ENCODE measurements at regions of chr1 and their contacts with region 1.

Region 1: DNA sequence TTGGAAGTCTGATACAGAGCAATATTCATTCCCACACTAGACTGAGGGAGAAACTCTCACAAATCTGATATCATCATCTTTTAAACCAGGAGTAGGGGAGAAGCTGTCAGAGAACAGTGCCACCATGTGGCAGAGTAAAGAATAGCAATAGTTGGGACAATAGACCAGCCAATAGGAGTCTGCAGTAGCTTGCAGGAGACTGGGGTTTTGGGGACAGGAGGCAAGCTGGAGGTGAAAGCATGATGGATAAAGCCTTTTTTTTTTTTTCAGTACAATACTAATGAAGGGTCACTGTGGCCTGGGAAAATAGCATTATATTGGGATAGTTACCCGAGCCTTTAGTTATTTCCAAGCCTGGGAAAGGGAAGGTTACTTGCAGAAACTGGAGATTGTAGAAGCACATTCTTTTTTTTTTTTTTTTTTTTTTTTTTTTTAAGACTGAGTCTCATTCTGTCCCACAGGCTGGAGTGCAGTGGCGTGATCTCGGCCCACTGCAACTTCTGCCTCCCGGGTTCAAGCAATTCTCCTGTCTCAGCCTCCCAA is 120.7 kb downstream of the S1PR1 start:
- DNase-seq: peak; percentile 69
- H3K4me3 Mint-ChIP-seq: no peak overlapping the region
- H3K27ac Mint-ChIP-seq: no peak overlapping the region
- H3K4me1 Mint-ChIP-seq: peaks cover 9% of the 10 kb centered on the region
- H3K27me3 Mint-ChIP-seq: peaks cover 23% of the 10 kb centered on the region

Region 2: DNA sequence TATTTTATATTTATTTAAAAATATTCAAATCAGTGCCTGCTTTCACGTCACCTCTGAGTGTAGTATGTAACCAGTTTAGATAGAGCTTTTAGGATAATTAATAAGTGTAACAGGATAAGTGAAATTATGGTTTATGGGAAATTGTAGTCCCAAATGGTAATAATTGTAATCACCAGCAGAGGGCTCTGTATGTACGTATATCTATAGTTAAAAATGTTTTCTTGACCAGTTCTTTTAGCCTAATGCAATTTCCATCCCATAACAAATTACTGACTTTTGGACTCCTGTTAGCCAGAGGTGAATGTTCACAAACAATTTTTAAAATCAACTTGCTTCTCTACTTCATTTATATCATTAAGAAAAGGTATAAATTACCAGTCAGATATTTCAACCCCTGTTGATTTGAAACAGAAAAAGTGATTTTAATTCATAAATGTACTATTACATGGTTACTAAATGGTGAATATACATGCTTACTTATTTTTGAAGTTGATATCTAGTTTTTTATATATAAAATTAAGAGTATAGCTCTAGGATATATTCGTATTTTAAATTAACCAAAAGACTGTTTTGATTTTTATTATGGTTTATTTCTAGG is 436.3 kb before region 1 on chr1:
- intact Hi-C with region 1: loop called (anchors 1 kb)
- DNase-seq: no peak
- H3K4me3 Mint-ChIP-seq: no peak overlapping the region
- H3K27ac Mint-ChIP-seq: no peak overlapping the region
- H3K4me1 Mint-ChIP-seq: peaks cover 29% of the 10 kb centered on the region
- H3K27me3 Mint-ChIP-seq: no peaks in the 10 kb centered on the region

Region 3: GRCh38 chr1:101025657-101026504 is 331.6 kb before region 1 on chr1 and contains the start of gene DPH5:
- intact Hi-C with region 1: loop called (anchors 2 kb)
- DNase-seq: peak; percentile 84
- H3K4me3 Mint-ChIP-seq: peak within 1 kb of the TSS; percentile 93
- H3K27ac Mint-ChIP-seq: peak within 1 kb of the TSS; percentile 87
- H3K4me1 Mint-ChIP-seq: peaks cover 58% of the 10 kb centered on the region
- H3K27me3 Mint-ChIP-seq: no peaks in the 10 kb centered on the region
- total RNA-seq, gene DPH5: 31.7 and 32.2 TPM in 2 replicates

Region 4: DNA sequence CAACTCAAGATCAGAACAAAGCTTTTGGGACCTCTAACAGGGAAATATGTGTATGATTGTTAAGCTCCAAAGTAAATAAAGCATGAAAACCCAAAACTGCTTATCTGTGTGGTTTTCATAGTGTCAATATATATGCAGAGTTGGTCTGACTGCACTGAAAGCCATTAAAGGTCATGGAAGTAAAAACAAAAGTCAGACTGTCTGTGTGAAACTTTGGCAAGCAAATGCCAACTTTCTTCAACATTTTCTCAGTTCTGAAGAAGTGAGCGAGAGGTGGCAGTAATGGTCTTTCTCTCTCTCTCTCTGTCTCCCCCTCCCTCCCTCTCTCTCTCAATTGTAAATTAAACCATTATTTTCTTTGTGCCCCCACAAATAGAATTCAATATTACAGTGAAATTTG is 220.8 kb before region 1 on chr1:
- intact Hi-C with region 1: loop called (anchors 1 kb)
- DNase-seq: peak; percentile 26
- H3K4me3 Mint-ChIP-seq: peak overlapping the region; percentile 30
- H3K27ac Mint-ChIP-seq: peak overlapping the region; percentile 38
- H3K4me1 Mint-ChIP-seq: peaks cover 63% of the 10 kb centered on the region
- H3K27me3 Mint-ChIP-seq: no peaks in the 10 kb centered on the region

Region 5: GRCh38 chr1:101293461-101294051 is 64.0 kb before region 1 on chr1:
- intact Hi-C with region 1: loop called (anchors 1 kb)
- DNase-seq: peak; percentile 37
- H3K4me3 Mint-ChIP-seq: peak overlapping the region; percentile 34
- H3K27ac Mint-ChIP-seq: peak overlapping the region; percentile 90
- H3K4me1 Mint-ChIP-seq: peaks cover 71% of the 10 kb centered on the region
- H3K27me3 Mint-ChIP-seq: peaks cover 13% of the 10 kb centered on the region

Region 6: DNA sequence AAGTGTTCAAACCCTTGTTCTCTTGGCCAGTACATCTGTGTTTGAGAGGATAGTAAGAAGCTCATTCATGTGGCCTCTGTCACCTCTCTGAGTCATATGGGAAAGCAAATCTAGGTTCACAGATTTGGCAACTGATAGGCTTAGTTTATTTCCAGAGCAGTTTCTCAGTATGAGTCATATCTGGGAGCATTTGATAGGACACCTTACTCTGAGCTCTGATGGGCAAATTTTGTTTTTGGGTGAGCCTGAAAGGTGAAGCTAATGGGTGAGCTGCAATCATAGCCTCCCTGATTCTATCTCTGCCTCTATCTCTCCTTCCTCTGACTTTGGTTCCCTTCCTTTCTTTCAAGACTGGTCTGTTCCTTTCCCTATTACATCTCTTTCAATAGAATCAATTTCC is 13.7 kb after region 1 on chr1:
- intact Hi-C with region 1: loop called (anchors 2 kb)
- DNase-seq: peak; percentile 33
- H3K4me3 Mint-ChIP-seq: peak overlapping the region; percentile 40
- H3K27ac Mint-ChIP-seq: no peak overlapping the region
- H3K4me1 Mint-ChIP-seq: peaks cover 12% of the 10 kb centered on the region
- H3K27me3 Mint-ChIP-seq: peaks cover 14% of the 10 kb centered on the region

Region 7: GRCh38 chr1:101382135-101382534 is 24.6 kb after region 1 on chr1:
- intact Hi-C with region 1: no loop called
- DNase-seq: no peak
- H3K4me3 Mint-ChIP-seq: no peak overlapping the region
- H3K27ac Mint-ChIP-seq: no peak overlapping the region
- H3K4me1 Mint-ChIP-seq: peaks cover 27% of the 10 kb centered on the region
- H3K27me3 Mint-ChIP-seq: peaks cover 5% of the 10 kb centered on the region

Region 8: GRCh38 chr1:101438359-101438758 is 80.8 kb after region 1 on chr1:
- intact Hi-C with region 1: loop called (anchors 1 kb)
- DNase-seq: no peak
- H3K4me3 Mint-ChIP-seq: no peak overlapping the region
- H3K27ac Mint-ChIP-seq: no peak overlapping the region
- H3K4me1 Mint-ChIP-seq: no peaks in the 10 kb centered on the region
- H3K27me3 Mint-ChIP-seq: peaks cover 30% of the 10 kb centered on the region